ENCODE measurements at regions of chr1 and their contacts with region 1.

Region 1: GRCh38 chr1:167220537-167221125 is at the start of gene POU2F1:
- DNase-seq: peak; percentile 95 to 97 (median 96)
- H3K4me3 ChIP-seq: peak within 1 kb of the TSS; percentile 67 to 100 (median 95)
- H3K27ac ChIP-seq: peak within 1 kb of the TSS; percentile 87 to 99 (median 97)
- H3K27me3 ChIP-seq: no peaks in the 10 kb centered on the region
- CTCF ChIP-seq: peak in 55 of 56 donors; percentile 39 to 86 (median 64)
- total RNA-seq, gene POU2F1: 14.7 to 50.1 (median 30.5) TPM

Region 2: GRCh38 chr1:166902271-166902670 is 318.4 kb before region 1 on chr1:
- intact Hi-C with region 1: loop called in 1 of 2 experiments (anchors 10 kb)
- DNase-seq: no peak
- H3K4me3 ChIP-seq: no peak overlapping the region
- H3K27ac ChIP-seq: no peak overlapping the region
- H3K27me3 ChIP-seq: no peaks in the 10 kb centered on the region
- CTCF ChIP-seq: no peak

Region 3: DNA sequence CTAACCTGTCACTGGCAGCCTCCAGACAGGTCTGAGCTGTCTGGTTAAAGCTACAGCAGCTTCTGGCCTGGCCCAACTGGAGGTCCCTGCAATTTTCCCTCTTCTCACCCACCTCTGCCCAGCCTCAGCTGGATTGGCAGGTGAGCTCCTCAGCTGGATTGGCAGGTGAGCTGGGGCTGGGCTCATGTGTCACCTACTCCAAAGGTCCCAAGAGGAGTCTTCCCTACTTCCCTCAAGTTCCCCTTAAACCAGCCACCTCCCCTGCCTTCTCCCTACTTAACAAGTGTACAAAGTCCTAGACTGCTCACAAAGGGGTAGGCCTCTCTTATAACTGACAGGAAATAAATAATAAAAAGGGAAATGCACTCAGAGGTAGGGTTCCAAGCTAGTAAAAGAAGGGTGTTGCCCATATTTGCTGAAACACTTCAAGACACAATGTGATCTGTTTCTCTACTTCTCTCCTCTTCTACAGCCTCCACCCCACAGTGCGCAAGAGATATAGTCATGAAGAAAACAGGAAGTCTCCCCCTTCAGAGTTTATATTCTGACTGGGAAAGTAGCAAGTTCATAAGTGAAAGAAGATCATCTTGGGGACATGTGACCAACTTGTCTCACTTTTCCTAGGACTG is 130.2 kb before region 1 on chr1 and contains the start of gene GPA33:
- intact Hi-C with region 1: no loop called
- DNase-seq: no peak
- H3K4me3 ChIP-seq: no peak within 1 kb of the TSS
- H3K27ac ChIP-seq: no peak within 1 kb of the TSS
- H3K27me3 ChIP-seq: no peaks in the 10 kb centered on the region
- CTCF ChIP-seq: no peak
- total RNA-seq, gene GPA33: 0.13 to 1.1 (median 0.28) TPM in 55 of 120 experiments, not detected in the others

Region 4: DNA sequence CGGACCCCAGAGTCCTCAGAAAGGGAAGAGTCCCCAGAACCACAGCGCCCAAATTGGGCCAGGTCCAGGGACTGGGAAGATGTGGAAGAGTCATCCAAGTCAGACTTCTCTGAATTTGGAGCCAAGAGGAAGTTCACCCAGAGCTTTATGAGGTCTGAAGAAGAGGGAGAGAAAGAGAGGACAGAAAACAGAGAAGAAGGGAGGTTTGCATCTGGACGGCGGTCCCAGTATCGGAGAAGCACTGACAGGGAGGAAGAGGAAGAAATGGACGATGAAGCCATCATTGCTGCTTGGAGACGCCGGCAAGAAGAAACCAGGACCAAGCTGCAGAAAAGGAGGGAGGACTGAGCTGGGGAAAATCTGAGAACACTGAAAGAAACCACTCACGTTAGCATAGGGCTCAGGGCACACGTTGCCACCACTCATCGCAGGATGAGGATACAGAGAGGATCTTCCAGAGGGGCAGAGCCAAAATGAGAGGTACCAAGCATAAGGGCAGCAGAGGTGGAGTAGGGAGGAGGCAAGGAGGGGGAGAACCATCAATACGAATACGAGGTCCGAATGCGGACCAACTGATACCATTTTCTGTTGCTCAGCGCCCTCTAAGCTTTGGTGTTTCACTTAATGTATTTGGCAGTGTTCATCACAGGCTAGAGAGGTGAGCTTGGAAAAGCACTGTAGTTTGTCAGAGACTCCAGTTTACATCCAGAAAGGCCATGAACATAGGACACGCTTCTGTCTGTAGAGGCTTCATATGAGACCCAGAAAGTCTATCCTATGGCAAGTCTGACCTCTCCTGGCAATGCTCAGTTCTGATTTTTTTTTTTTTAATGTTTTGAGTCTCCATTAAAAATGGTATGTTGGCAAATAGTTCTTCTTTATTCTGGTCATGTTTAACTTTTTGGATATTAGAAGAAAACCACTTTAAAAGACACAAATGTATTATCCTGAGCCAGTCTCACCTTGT is 92.1 kb before region 1 on chr1:
- intact Hi-C with region 1: loop called in 1 of 2 experiments (anchors 5 kb)
- DNase-seq: no peak
- H3K4me3 ChIP-seq: no peak overlapping the region
- H3K27ac ChIP-seq: no peak overlapping the region
- H3K27me3 ChIP-seq: peaks cover 0 to 7% (median 0%) of the 10 kb centered on the region in 45 donors
- CTCF ChIP-seq: peak in 20 of 56 donors; percentile 8 to 53 (median 22)

Region 5: GRCh38 chr1:167442124-167442848 is 221.7 kb after region 1 on chr1:
- intact Hi-C with region 1: loop called in 1 of 2 experiments (anchors 5 kb)
- DNase-seq: peak; percentile 66 to 86 (median 76)
- H3K4me3 ChIP-seq: no peak overlapping the region
- H3K27ac ChIP-seq: no peak overlapping the region
- H3K27me3 ChIP-seq: peaks cover 0 to 2% (median 0%) of the 10 kb centered on the region in 45 donors
- CTCF ChIP-seq: peak; percentile 48 to 93 (median 84)